ENCODE measurements at regions of chr22 and their contacts with region 1.

Region 1: GRCh38 chr22:41619979-41620588 is 759 bp downstream of the DESI1 start:
- DNase-seq: no peak
- H3K4me3 ChIP-seq: peak overlapping the region; percentile 99
- CTCF ChIP-seq: no peak

Region 2: DNA sequence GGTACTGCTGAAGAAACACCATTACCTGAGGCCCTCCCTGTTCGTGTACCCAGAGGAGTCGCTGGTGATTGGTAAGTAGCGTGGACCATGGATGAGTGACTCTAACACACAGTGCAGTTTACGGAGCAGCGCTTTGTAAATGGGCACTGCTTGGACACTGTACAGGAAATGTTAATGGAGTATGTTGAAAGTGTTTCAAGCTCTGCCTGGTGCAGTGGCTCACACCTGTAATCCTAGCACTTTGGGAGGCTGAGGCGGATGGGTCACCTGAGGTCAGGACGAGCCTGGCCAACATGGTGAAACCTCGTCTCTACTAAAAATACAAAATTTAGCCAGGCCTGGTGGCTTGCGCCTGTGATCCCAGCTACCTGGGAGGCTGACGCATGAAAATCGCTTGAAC is 30.7 kb after region 1 on chr22:
- in situ Hi-C with region 1: loop called (anchors 5 kb)
- DNase-seq: no peak
- H3K4me3 ChIP-seq: no peak overlapping the region
- CTCF ChIP-seq: no peak

Region 3: DNA sequence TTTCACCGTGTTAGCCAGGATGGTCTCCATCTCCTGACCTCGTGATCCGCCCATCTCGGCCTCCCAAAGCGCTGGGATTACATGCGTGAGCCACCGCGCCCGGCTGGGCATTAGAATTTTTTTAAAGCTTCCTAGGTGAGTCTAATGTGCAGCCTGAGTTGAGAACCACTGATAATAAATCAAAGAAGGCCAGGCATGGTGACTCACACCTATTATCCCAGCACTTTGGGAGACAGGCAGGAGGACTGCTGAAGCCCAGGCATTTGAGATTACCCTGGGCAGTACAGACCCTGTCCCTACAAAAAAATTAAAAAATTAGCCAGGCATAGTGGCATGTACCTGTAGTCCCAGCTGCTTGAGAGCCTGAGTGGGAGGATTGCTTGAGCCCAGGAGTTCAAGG is 92.9 kb after region 1 on chr22:
- in situ Hi-C with region 1: no loop called
- DNase-seq: no peak
- H3K4me3 ChIP-seq: no peak overlapping the region
- CTCF ChIP-seq: no peak

Measured in astrocyte of the cerebellum (primary cell).